ENCODE measurements at regions of chr19 and their contacts with region 1.

Region 1: GRCh38 chr19:2021453-2022140 is 6.1 kb upstream of the BTBD2 start:
- DNase-seq: peak; percentile 90 to 92
- H3K4me3 ChIP-seq: no peak overlapping the region
- H3K27ac ChIP-seq: peak overlapping the region; percentile 38 to 66 (median 44)
- H3K4me1 ChIP-seq: peaks cover 4 to 6% of the 10 kb centered on the region in 2 donors
- H3K27me3 ChIP-seq: no peaks in the 10 kb centered on the region
- CTCF ChIP-seq: no peak
- POLR2A ChIP-seq: peak in 1 of 2 donors; percentile 48

Region 2: GRCh38 chr19:2070436-2070827 is 48.8 kb after region 1 on chr19:
- intact Hi-C with region 1: loop called (anchors 2 kb)
- DNase-seq: no peak
- H3K4me3 ChIP-seq: no peak overlapping the region
- H3K27ac ChIP-seq: no peak overlapping the region
- H3K4me1 ChIP-seq: peaks cover 3 to 7% of the 10 kb centered on the region in 2 donors
- H3K27me3 ChIP-seq: no peaks in the 10 kb centered on the region
- CTCF ChIP-seq: no peak
- POLR2A ChIP-seq: no peak

Measured in thyroid gland (tissue), 4 donors.